ENCODE measurements at regions of chr6 and their contacts with region 1.

Region 1: DNA sequence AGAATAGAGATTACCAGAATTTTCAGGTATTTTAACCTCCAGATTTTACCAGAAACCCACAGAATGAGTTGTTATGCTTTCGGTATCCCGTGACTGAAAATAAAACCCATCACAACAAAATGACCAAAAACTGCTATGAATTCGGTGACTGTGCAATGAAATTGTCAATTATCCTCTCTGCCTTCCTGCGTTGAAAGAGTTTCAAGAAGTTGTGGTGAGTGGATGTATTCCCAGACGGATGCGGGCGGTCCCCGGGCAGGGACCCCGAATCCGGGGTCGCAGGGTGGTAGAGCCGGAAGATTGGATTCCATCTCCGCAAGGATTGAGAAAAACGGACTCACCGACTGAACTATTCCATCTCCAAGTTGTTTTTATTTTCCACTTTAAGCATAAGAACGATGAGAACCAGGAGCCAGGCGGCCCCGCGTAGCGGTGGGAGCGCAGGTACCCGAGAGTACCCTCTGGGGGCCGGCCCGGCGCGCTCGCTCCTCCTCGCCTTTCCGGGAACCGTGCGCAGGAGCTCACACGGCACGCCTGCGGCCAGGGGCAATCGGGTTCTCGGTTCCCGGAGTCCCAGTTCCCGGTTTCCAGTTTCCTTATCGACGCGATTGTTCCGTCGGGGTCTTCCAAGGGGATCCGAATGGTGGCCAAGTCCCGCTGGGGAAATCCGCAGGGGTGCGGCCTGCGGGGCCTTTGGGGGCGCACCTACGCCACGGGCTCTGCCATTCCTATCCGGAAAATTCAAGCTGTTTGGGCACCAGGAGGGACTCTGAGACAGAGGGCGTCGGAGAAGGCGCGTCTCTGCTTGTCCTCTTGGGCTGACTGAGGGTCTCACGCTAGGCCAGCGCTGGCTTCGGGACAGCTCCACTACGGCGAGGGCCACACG is 104.9 kb upstream of the PRDM1 start:
- DNase-seq: peak; percentile 60
- H3K4me3 Mint-ChIP-seq: peak overlapping the region; percentile 78
- H3K27ac Mint-ChIP-seq: peak overlapping the region; percentile 93
- H3K4me1 Mint-ChIP-seq: peaks cover 53% of the 10 kb centered on the region
- H3K27me3 Mint-ChIP-seq: peaks cover 32% of the 10 kb centered on the region

Region 2: GRCh38 chr6:105601541-105602236 is 379.6 kb before region 1 on chr6:
- CTCF ChIA-PET with region 1: no interaction called
- POLR2A ChIA-PET with region 1: no interaction called
- intact Hi-C with region 1: loop called (anchors 5 kb)
- DNase-seq: peak; percentile 86
- H3K4me3 Mint-ChIP-seq: peak overlapping the region; percentile 33
- H3K27ac Mint-ChIP-seq: peak overlapping the region; percentile 86
- H3K4me1 Mint-ChIP-seq: peaks cover 26% of the 10 kb centered on the region
- H3K27me3 Mint-ChIP-seq: peaks cover 3% of the 10 kb centered on the region

Region 3: GRCh38 chr6:105872246-105872645 is 109.0 kb before region 1 on chr6:
- CTCF ChIA-PET with region 1: interaction called, 3 read pairs
- POLR2A ChIA-PET with region 1: interaction called, 5 read pairs
- intact Hi-C with region 1: loop called (anchors 2 kb)
- DNase-seq: no peak
- H3K4me3 Mint-ChIP-seq: no peak overlapping the region
- H3K27ac Mint-ChIP-seq: no peak overlapping the region
- H3K4me1 Mint-ChIP-seq: peaks cover 12% of the 10 kb centered on the region
- H3K27me3 Mint-ChIP-seq: peaks cover 26% of the 10 kb centered on the region

Region 4: GRCh38 chr6:105920071-105920470 is 61.2 kb before region 1 on chr6:
- CTCF ChIA-PET with region 1: no interaction called
- POLR2A ChIA-PET with region 1: no interaction called
- intact Hi-C with region 1: loop called (anchors 1 kb)
- DNase-seq: peak; percentile 50
- H3K4me3 Mint-ChIP-seq: no peak overlapping the region
- H3K27ac Mint-ChIP-seq: peak overlapping the region; percentile 74
- H3K4me1 Mint-ChIP-seq: peaks cover 13% of the 10 kb centered on the region
- H3K27me3 Mint-ChIP-seq: peaks cover 7% of the 10 kb centered on the region

Region 5: GRCh38 chr6:106103728-106104109 is 122.5 kb after region 1 on chr6:
- CTCF ChIA-PET with region 1: no interaction called
- POLR2A ChIA-PET with region 1: interaction called, 31 read pairs
- intact Hi-C with region 1: loop called (anchors 1 kb)
- DNase-seq: peak; percentile 71
- H3K4me3 Mint-ChIP-seq: peak overlapping the region; percentile 91
- H3K27ac Mint-ChIP-seq: peak overlapping the region; percentile 96
- H3K4me1 Mint-ChIP-seq: peaks cover 79% of the 10 kb centered on the region
- H3K27me3 Mint-ChIP-seq: no peaks in the 10 kb centered on the region

Measured in activated CD4-positive, alpha-beta memory T cell treated with anti-CD3 and anti-CD28 coated beads for 36 hours (primary cell).